Natural killer cell (primary cell): ENCODE measurements at regions of chr10 and their contacts with region 1.

Region 1: GRCh38 chr10:49614242-49615198 is 683 bp downstream of the CHAT start:
- DNase-seq: no peak
- ATAC-seq: no peak
- H3K4me3 ChIP-seq: no peak overlapping the region
- H3K4me3 Mint-ChIP-seq: no peak overlapping the region
- H3K27ac ChIP-seq: no peak overlapping the region
- H3K27ac Mint-ChIP-seq: no peak overlapping the region
- H3K4me1 ChIP-seq: peaks cover 4% of the 10 kb centered on the region
- H3K4me1 Mint-ChIP-seq: peaks cover 6 to 15% of the 10 kb centered on the region in 2 donors
- H3K27me3 ChIP-seq: peaks cover 34% of the 10 kb centered on the region
- H3K27me3 Mint-ChIP-seq: peaks cover 62 to 69% of the 10 kb centered on the region in 2 donors
- CTCF ChIP-seq: no peak

Region 2: DNA sequence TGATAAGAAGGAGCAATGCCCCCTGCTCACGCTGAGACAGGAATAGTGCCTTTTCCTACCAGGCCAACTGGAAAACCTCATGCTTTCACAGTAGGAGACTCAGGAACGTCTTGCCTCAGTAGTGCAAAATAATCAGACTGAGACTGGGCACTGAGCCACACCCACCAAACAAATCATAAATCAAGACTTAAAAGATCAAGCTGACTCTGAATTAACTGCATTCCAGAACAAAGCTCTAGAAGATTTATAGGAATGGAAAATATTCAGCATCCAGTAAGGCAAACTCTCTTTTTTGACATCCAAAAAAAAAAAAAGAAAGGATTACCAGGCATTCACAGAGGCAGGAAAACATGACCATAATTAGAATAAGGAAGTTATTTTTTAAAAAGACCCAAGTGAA is 34.9 kb before region 1 on chr10:
- intact Hi-C with region 1: loop called (anchors 2 kb)
- DNase-seq: no peak
- ATAC-seq: no peak
- H3K4me3 ChIP-seq: no peak overlapping the region
- H3K4me3 Mint-ChIP-seq: no peak overlapping the region
- H3K27ac ChIP-seq: no peak overlapping the region
- H3K27ac Mint-ChIP-seq: no peak overlapping the region
- H3K4me1 ChIP-seq: no peaks in the 10 kb centered on the region
- H3K4me1 Mint-ChIP-seq: no peaks in the 10 kb centered on the region
- H3K27me3 ChIP-seq: peaks cover 2% of the 10 kb centered on the region
- H3K27me3 Mint-ChIP-seq: peaks cover 22% of the 10 kb centered on the region in 2 donors
- CTCF ChIP-seq: no peak